ENCODE measurements at regions of chr2 and their contacts with region 1.

Region 1: GRCh38 chr2:20661067-20661980 is 5.6 kb upstream of the GDF7 start:
- DNase-seq: peak in 4 of 6 donors; percentile 42 to 78 (median 55)
- ATAC-seq: peak; percentile 75 to 92 (median 89)
- H3K4me3 ChIP-seq: no peak overlapping the region
- H3K27ac ChIP-seq: no peak overlapping the region
- H3K4me1 ChIP-seq: no peaks in the 10 kb centered on the region
- H3K27me3 ChIP-seq: peaks cover 0 to 8% (median 3%) of the 10 kb centered on the region in 4 donors
- CTCF ChIP-seq: peak; percentile 93 to 97 (median 95)

Region 2: GRCh38 chr2:20755132-20755800 is 93.9 kb after region 1 on chr2:
- intact Hi-C with region 1: loop called in 1 of 3 experiments (anchors 10 kb)
- DNase-seq: no peak
- ATAC-seq: no peak
- H3K4me3 ChIP-seq: no peak overlapping the region
- H3K27ac ChIP-seq: no peak overlapping the region
- H3K4me1 ChIP-seq: no peaks in the 10 kb centered on the region
- H3K27me3 ChIP-seq: no peaks in the 10 kb centered on the region
- CTCF ChIP-seq: no peak

Region 3: GRCh38 chr2:20852139-20852538 is 190.8 kb after region 1 on chr2:
- intact Hi-C with region 1: no loop called
- DNase-seq: no peak
- ATAC-seq: no peak
- H3K4me3 ChIP-seq: no peak overlapping the region
- H3K27ac ChIP-seq: no peak overlapping the region
- H3K4me1 ChIP-seq: no peaks in the 10 kb centered on the region
- H3K27me3 ChIP-seq: no peaks in the 10 kb centered on the region
- CTCF ChIP-seq: no peak

Region 4: DNA sequence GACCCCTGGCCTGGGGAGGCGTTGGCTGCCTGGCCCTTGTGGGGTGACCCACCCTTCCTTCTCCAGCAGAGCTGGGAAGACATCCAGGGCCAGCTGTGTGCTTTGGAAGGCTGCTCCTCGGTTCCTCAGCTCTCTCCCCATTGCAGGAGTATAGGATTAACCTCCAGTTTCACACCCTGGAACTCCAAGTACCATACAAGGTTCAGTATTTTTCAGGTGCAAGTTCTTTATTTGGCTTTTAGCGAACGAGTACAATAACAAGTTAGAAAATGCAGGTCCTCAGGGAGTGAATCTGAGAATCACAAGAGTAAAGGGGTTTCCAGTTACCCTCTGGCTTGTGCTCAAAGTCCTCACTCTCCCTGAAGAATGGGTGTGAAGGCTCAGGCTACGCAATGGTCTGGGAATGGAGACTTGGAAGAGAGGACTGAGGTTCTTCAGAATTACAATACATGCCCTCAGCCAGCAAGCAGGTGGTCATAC is 281.4 kb after region 1 on chr2:
- intact Hi-C with region 1: no loop called
- DNase-seq: no peak
- ATAC-seq: no peak
- H3K4me3 ChIP-seq: no peak overlapping the region
- H3K27ac ChIP-seq: no peak overlapping the region
- H3K4me1 ChIP-seq: no peaks in the 10 kb centered on the region
- H3K27me3 ChIP-seq: no peaks in the 10 kb centered on the region
- CTCF ChIP-seq: no peak

Region 5: GRCh38 chr2:20962939-20963557 is 301.7 kb after region 1 on chr2:
- intact Hi-C with region 1: loop called (anchors 5 to 10 kb)
- DNase-seq: peak in 5 of 6 donors; percentile 47 to 87 (median 68)
- ATAC-seq: peak; percentile 64 to 98 (median 92)
- H3K4me3 ChIP-seq: no peak overlapping the region
- H3K27ac ChIP-seq: no peak overlapping the region
- H3K4me1 ChIP-seq: no peaks in the 10 kb centered on the region
- H3K27me3 ChIP-seq: no peaks in the 10 kb centered on the region
- CTCF ChIP-seq: peak; percentile 80 to 90 (median 82)

Measured in pancreas (tissue), 10 donors.